Transverse colon (tissue), 4 donors: ENCODE measurements at regions of chr5 and their contacts with region 1.

Region 1: GRCh38 chr5:50440651-50441492 is at the start of gene EMB:
- DNase-seq: peak; percentile 76
- H3K4me3 ChIP-seq: peak within 1 kb of the TSS; percentile 23 to 56 (median 31)
- H3K27ac ChIP-seq: peak within 1 kb of the TSS; percentile 71 to 84 (median 78)
- H3K4me1 ChIP-seq: no peaks in the 10 kb centered on the region
- H3K27me3 ChIP-seq: peaks cover 10% of the 10 kb centered on the region
- CTCF ChIP-seq: no peak
- EP300 ChIP-seq: no peak
- POLR2A ChIP-seq: peak; percentile 44
- total RNA-seq, gene EMB: 0.20 to 13.0 (median 7.9) TPM

Region 2: DNA sequence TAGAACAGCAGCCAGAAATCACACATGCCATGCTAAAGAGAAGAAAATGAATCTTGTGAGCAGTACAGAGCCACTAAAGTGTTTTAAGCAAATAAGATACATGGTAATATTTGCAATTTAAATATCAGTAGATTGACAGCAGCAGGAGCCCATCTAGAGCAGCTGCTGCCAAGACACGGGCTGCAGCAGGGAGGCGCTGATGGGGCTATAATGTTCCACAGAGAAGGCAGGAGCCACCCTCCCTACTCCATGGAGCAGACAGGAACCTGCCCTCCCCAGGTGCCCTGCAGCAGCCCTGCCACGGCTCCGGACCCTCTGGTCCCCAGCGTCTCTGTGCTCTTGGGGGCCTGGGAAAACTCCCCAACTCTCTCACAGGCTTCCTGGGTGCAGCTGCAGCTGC is 718.3 kb after region 1 on chr5:
- in situ Hi-C with region 1: no loop called
- intact Hi-C with region 1: loop called (anchors 10 kb)
- DNase-seq: no peak
- H3K4me3 ChIP-seq: no peak overlapping the region
- H3K27ac ChIP-seq: no peak overlapping the region
- H3K4me1 ChIP-seq: no peaks in the 10 kb centered on the region
- H3K27me3 ChIP-seq: no peaks in the 10 kb centered on the region
- CTCF ChIP-seq: no peak
- EP300 ChIP-seq: no peak
- POLR2A ChIP-seq: no peak